HepG2 (cell line): ENCODE measurements at regions of chr2 and their contacts with region 1.

Region 1: DNA sequence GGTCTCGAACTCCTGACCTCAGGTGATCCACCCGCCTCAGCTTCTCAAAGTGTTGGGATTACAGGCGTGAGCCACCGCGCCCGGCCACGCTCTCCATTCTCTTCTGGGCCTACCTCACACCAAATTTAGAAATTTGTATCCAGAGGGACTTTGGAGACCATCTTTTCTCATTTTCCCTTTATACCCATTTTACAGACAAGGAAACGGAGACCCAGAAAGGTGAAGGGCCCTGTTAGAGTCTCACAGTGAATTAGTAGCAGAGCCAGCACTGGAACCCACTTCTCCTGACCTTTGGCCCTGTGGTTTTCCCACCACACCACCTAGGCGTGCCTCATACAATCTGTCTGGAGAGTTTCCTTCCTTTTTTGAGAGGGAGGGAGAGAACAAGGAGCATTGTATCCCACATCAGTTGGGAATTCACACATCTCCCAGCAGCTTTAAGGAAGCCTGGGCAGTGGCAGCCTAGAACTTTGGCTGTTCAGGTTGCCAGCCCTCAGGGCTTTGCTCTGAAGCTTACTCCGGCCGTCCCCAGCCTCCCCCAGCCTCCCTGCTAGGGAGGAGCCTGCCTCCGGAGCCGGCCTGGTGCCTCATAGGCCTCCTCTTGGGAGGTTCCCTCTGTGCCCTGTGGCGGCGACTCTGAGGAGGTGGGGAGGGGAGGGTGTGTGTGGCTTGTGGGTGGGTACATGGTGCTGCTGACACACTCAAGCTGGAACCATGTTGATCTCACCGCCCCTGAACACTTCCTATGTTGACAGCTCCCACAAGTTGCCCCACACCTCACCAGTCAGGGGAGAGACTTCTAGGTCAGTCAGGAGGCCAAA is 13.8 kb downstream of the FOSL2 start:
- DNase-seq: no peak
- ATAC-seq: no peak; the same call in 2 of the 3 replicates
- H3K4me3 ChIP-seq: no peak overlapping the region
- H3K27ac ChIP-seq: peak overlapping the region; percentile 38
- H3K4me1 ChIP-seq: peaks cover 44% of the 10 kb centered on the region
- H3K27me3 ChIP-seq: no peaks in the 10 kb centered on the region
- CTCF ChIP-seq: no peak
- EP300 ChIP-seq: no peak
- POLR2A ChIP-seq: no peak
- RAD21 ChIP-seq: no peak

Region 2: DNA sequence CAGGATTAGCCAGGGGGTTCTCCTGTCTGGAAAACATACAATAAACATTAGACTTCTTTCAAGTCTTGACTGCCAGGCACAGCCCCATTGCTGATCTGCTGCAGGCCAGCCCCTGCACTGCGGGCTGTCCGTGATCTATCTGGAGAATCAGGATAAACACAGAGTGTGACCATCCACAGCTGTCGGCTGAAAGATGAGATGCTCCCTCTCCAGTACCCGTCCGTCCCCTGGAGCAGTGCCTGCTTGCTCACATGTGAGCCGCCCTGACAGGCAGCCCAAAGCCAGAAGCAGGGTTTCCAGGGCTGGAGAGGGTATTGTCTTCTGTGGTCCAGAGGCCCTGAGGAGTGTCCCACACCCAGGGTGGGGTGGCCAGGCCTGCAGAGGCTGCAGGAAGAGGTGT is 59.9 kb before region 1 on chr2:
- CTCF ChIA-PET with region 1: no interaction called
- POLR2A ChIA-PET with region 1: no interaction called
- in situ Hi-C with region 1: no loop called
- intact Hi-C with region 1: no loop called
- DNase-seq: no peak
- ATAC-seq: peak; percentile 12
- H3K4me3 ChIP-seq: no peak overlapping the region
- H3K27ac ChIP-seq: no peak overlapping the region
- H3K4me1 ChIP-seq: peaks cover 26% of the 10 kb centered on the region
- H3K27me3 ChIP-seq: peaks cover 8 to 22% of the 10 kb centered on the region in 2 experiments; a peak in 4 of 5 replicates
- CTCF ChIP-seq: no peak
- EP300 ChIP-seq: no peak
- POLR2A ChIP-seq: no peak
- RAD21 ChIP-seq: no peak

Region 3: DNA sequence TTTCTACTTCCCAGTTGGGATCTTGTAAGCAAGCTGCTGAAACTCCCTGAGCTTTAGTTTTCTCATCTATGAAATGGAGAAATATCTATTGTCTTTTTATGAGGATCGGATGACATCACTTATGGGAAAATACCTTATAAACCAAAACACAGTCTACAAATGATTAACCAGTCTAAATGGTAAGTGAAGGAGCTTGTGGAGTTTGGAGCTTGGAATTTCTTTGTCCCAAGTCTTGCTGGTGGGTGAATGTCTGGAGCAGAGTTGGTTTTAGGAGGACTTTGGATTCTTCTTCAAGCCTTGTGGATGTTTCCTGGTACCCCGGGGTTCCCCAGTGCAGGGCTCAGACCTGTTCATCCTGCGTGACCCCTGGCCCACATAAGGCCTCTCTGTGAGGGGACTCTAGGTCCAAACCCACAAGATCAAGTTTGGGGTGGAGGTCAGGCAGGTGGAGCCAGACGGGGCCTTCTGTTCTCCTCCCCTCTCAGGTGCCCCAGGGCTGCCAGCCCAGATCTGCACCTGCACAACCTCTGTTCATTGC is 29.4 kb after region 1 on chr2:
- CTCF ChIA-PET with region 1: no interaction called
- POLR2A ChIA-PET with region 1: interaction called, 11 read pairs
- in situ Hi-C with region 1: no loop called
- intact Hi-C with region 1: no loop called
- DNase-seq: no peak
- ATAC-seq: no peak
- H3K4me3 ChIP-seq: no peak overlapping the region
- H3K27ac ChIP-seq: no peak overlapping the region
- H3K4me1 ChIP-seq: peaks cover 43% of the 10 kb centered on the region
- H3K27me3 ChIP-seq: no peaks in the 10 kb centered on the region
- CTCF ChIP-seq: no peak
- EP300 ChIP-seq: no peak
- POLR2A ChIP-seq: no peak
- RAD21 ChIP-seq: no peak

Region 4: GRCh38 chr2:28751956-28752630 is 345.6 kb after region 1 on chr2:
- CTCF ChIA-PET with region 1: no interaction called
- POLR2A ChIA-PET with region 1: no interaction called
- in situ Hi-C with region 1: no loop called
- intact Hi-C with region 1: no loop called
- DNase-seq: no peak
- ATAC-seq: peak; percentile 79
- H3K4me3 ChIP-seq: peak overlapping the region; percentile 91 to 98 (median 95)
- H3K27ac ChIP-seq: peak overlapping the region; percentile 96
- H3K4me1 ChIP-seq: peaks cover 48% of the 10 kb centered on the region
- H3K27me3 ChIP-seq: no peaks in the 10 kb centered on the region; a peak in 1 of 5 replicates
- CTCF ChIP-seq: no peak; the same call in 1 of the 2 replicates
- EP300 ChIP-seq: no peak
- POLR2A ChIP-seq: peak; percentile 49 to 80; a peak in 3 of 4 replicates
- RAD21 ChIP-seq: peak; percentile 30; the same call in 1 of the 2 replicates

Region 5: DNA sequence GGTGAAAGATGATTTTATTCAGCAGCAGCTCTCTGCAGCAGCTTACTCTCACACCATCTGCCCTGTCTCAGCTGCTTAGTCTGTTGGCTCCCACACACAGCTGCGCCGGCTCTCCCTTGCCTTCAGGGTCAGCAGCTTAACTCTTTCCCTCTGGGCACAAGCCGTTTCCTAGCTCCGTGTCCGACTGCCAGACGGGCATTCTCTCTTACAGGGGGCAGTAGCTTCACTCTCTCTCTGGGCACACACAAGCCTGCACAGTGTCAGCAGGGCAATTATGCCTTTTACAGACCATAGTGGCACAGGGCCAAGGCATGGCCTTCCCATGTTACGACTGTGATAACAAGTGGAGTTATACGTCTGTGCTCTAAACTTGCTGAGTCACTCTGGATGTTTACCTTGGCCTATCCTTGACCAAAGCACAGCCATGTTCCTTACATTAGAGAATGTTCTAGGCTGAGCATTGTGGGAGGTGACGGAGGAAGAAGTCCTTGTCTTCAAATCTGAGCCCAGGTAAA is 636.1 kb after region 1 on chr2:
- CTCF ChIA-PET with region 1: no interaction called
- POLR2A ChIA-PET with region 1: no interaction called
- in situ Hi-C with region 1: no loop called
- intact Hi-C with region 1: no loop called
- DNase-seq: no peak
- ATAC-seq: no peak; the same call in 1 of the 3 replicates
- H3K4me3 ChIP-seq: no peak overlapping the region
- H3K27ac ChIP-seq: no peak overlapping the region
- H3K4me1 ChIP-seq: peaks cover 6% of the 10 kb centered on the region
- H3K27me3 ChIP-seq: peaks cover 2 to 58% of the 10 kb centered on the region in 2 experiments; a peak in 4 of 5 replicates
- CTCF ChIP-seq: no peak
- EP300 ChIP-seq: no peak
- POLR2A ChIP-seq: no peak
- RAD21 ChIP-seq: no peak